Heart left ventricle (tissue), 16 donors: ENCODE measurements at regions of chr6 and their contacts with region 1.

Region 1: GRCh38 chr6:15254070-15254841 is 8.4 kb downstream of the JARID2 start:
- DNase-seq: no peak
- ATAC-seq: no peak
- H3K4me3 ChIP-seq: no peak overlapping the region
- H3K27ac ChIP-seq: peak overlapping the region in 1 of 12 donors; percentile 47
- H3K4me1 ChIP-seq: peaks cover 0 to 95% (median 45%) of the 10 kb centered on the region in 12 donors
- H3K27me3 ChIP-seq: no peaks in the 10 kb centered on the region
- CTCF ChIP-seq: peak in 1 of 12 donors; percentile 11
- POLR2A ChIP-seq: no peak

Region 2: DNA sequence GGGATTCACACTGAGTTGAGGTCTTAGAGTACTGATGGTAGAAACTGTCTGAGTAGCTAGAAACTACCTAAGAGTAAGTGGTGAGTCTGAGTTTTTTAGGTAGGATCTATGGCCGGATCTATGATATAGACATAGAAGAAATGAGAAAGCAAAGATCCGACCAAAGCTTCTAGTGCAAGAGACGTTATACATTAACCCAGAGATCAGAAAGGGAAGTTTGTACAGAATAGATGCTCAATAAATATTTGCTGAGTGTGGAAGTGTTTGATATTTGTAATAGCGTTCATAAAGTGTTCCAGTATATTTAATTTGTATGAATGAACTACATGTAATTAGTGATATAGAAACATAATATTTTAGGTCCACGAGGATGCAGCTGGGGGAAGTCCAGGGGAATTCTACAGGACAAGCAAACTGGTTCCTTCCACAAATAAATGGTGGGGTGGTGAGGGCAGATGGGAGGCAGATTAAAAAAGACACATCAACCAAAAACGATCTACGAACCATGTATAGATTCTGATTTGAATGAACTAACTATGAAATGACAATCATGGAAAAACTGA is 40.3 kb before region 1 on chr6:
- intact Hi-C with region 1: no loop called
- DNase-seq: no peak
- ATAC-seq: no peak
- H3K4me3 ChIP-seq: no peak overlapping the region
- H3K27ac ChIP-seq: no peak overlapping the region
- H3K4me1 ChIP-seq: no peaks in the 10 kb centered on the region
- H3K27me3 ChIP-seq: no peaks in the 10 kb centered on the region
- CTCF ChIP-seq: no peak
- POLR2A ChIP-seq: no peak

Region 3: DNA sequence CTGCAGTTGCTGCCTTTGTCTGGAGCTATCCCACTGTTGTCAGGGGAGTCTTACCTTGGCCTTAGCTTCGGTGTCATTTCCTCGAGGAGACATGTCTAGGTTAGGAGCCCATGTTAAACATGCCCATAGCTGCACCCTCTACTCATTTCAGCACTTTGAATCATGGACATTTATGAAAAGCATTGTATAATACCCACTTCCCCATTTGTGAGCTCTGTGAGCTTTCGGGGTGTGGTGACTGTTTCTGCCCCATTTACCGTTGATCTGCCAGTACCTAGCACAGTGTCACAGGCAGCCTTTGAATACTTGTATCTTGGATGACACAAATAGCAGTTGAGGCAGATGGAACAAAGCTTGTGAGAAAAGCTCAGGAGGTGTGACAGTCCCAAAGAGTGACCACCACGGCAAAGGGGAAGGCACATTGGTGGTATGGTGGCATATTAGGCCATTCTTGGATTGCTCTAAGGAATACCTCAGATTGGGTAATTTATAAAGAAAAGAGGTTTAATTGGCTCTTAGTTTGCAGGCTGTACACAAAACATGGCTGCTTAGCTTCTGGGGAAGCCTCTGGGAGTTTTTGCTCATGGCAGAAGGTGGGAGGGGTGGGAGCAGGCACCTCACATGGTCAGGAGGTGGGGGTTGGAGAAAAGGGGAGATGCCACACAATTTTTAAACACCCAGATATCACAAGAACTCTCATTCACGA is 33.6 kb after region 1 on chr6:
- intact Hi-C with region 1: no loop called
- DNase-seq: no peak
- ATAC-seq: peak in 1 of 4 donors; percentile 67
- H3K4me3 ChIP-seq: no peak overlapping the region
- H3K27ac ChIP-seq: no peak overlapping the region
- H3K4me1 ChIP-seq: peaks cover 0 to 56% (median 20%) of the 10 kb centered on the region in 12 donors
- H3K27me3 ChIP-seq: no peaks in the 10 kb centered on the region
- CTCF ChIP-seq: no peak
- POLR2A ChIP-seq: no peak

Region 4: GRCh38 chr6:15399641-15400470 is 145.6 kb after region 1 on chr6:
- intact Hi-C with region 1: loop called in 3 of 10 experiments (anchors 2 to 10 kb)
- DNase-seq: peak; percentile 77 to 86 (median 82)
- ATAC-seq: peak; percentile 79 to 89 (median 86)
- H3K4me3 ChIP-seq: peak overlapping the region in 10 of 12 donors; percentile 32 to 57 (median 50)
- H3K27ac ChIP-seq: peak overlapping the region in 11 of 12 donors; percentile 43 to 84 (median 71)
- H3K4me1 ChIP-seq: peaks cover 4 to 72% (median 53%) of the 10 kb centered on the region in 12 donors
- H3K27me3 ChIP-seq: no peaks in the 10 kb centered on the region
- CTCF ChIP-seq: no peak
- POLR2A ChIP-seq: no peak

Region 5: DNA sequence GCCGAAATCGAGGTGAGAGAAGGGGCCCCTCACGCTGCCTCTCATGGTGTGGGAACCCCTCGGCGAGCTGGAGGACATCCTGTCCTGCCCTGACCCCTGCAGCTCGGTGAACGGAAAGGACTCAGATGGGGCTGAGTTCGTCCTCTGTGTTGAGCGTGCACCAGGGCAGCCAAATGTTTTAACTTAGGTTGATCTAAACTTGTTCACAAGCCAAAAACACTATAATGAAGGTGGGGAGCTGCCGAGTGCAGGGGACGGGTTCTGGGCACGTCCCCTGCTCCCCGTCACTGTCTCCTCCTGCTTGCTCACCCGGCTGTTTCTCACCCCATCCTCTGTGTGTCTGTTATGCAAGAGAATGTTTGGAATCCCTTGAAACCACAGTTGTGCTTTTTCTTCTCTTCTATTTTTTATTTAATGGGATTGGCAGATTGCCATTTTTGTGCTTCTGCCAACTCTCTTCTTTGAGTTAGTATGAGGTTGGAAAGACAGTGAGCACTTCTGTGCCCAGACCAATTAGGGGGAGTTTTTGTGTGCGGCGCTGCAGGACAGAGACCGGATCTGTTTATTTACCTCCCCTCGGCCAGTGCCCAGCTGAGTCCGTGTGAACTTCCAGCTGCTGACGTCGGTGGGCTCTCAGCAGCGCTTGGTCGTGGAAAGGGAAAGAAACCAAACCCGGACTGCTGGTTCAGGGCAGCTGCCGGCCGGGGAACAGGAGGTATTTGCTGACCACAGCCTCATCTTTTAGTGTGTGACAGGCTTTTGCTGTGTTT is 250.5 kb after region 1 on chr6:
- intact Hi-C with region 1: loop called in 6 of 10 experiments (anchors 5 to 10 kb)
- DNase-seq: peak; percentile 75 to 81 (median 78)
- ATAC-seq: peak; percentile 72 to 87 (median 78)
- H3K4me3 ChIP-seq: peak overlapping the region in 10 of 12 donors; percentile 10 to 50 (median 33)
- H3K27ac ChIP-seq: peak overlapping the region; percentile 67 to 89 (median 79)
- H3K4me1 ChIP-seq: peaks cover 0 to 56% (median 43%) of the 10 kb centered on the region in 12 donors
- H3K27me3 ChIP-seq: no peaks in the 10 kb centered on the region
- CTCF ChIP-seq: no peak
- POLR2A ChIP-seq: no peak

Region 6: DNA sequence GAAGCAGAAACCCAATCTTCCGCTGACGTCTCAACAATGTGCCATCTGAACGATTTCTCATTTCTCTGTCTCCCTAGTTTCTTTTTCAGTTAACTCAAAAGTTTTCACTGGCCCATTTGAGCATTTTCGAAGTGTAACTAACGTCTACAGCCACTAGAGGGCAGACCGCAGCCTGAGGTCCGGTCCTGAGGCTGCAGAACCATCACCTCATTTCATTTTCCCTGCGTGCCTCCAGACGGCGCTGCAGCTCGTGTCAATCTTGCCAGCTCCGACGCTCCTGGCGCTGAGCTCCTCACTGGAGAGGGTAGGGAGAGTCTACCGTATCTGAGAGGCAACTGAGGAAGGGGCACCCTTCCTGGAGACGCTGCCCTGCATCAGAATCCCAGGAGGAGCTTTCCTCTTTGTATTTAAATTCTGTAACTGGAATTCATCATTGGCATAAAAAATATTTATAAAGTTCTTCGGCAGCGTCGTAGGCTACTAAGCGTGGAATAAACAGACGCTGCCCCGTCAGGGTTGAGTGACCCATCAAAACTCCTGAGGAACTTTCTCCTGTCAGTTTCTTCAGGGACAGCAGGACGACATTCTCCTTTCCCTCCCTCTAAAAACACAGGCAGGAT is 437.1 kb after region 1 on chr6:
- intact Hi-C with region 1: no loop called
- DNase-seq: peak; percentile 84 to 91 (median 87)
- ATAC-seq: peak; percentile 82 to 100 (median 96)
- H3K4me3 ChIP-seq: peak overlapping the region in 10 of 12 donors; percentile 13 to 56 (median 32)
- H3K27ac ChIP-seq: peak overlapping the region in 3 of 12 donors; percentile 37 to 51 (median 43)
- H3K4me1 ChIP-seq: peaks cover 0 to 17% (median 9%) of the 10 kb centered on the region in 12 donors
- H3K27me3 ChIP-seq: no peaks in the 10 kb centered on the region
- CTCF ChIP-seq: peak; percentile 98 to 100 (median 100)
- POLR2A ChIP-seq: no peak

Region 7: GRCh38 chr6:16332175-16332542 is 1077.9 kb after region 1 on chr6:
- intact Hi-C with region 1: no loop called
- DNase-seq: peak; percentile 68 to 82 (median 81)
- ATAC-seq: peak; percentile 72 to 87 (median 78)
- H3K4me3 ChIP-seq: peak overlapping the region in 1 of 12 donors; percentile 3
- H3K27ac ChIP-seq: peak overlapping the region in 3 of 12 donors; percentile 5 to 41 (median 41)
- H3K4me1 ChIP-seq: peaks cover 11 to 60% (median 34%) of the 10 kb centered on the region in 12 donors
- H3K27me3 ChIP-seq: no peaks in the 10 kb centered on the region
- CTCF ChIP-seq: peak; percentile 87 to 97 (median 92)
- POLR2A ChIP-seq: no peak